HEK293 (cell line): ENCODE measurements at regions of chr10 and their contacts with region 1.

Region 1: GRCh38 chr10:92929896-92930295 is 81.6 kb downstream of the EXOC6 start:
- H3K4me3 ChIP-seq: no peak overlapping the region
- H3K27ac ChIP-seq: no peak overlapping the region
- H3K4me1 ChIP-seq: no peaks in the 10 kb centered on the region
- CTCF ChIP-seq: no peak

Region 2: GRCh38 chr10:92880233-92880861 is 49.5 kb before region 1 on chr10:
- CTCF ChIA-PET with region 1: no interaction called
- POLR2A ChIA-PET with region 1: no interaction called
- H3K4me3 ChIP-seq: no peak overlapping the region
- H3K27ac ChIP-seq: no peak overlapping the region
- H3K4me1 ChIP-seq: no peaks in the 10 kb centered on the region
- CTCF ChIP-seq: no peak

Region 3: GRCh38 chr10:92914478-92915325 is 15.2 kb before region 1 on chr10:
- CTCF ChIA-PET with region 1: interaction called, 11 read pairs
- POLR2A ChIA-PET with region 1: no interaction called
- H3K4me3 ChIP-seq: no peak overlapping the region
- H3K27ac ChIP-seq: no peak overlapping the region
- H3K4me1 ChIP-seq: no peaks in the 10 kb centered on the region
- CTCF ChIP-seq: 0 out of 2 replicates have a peak, but pooled peaks have one; percentile 19

Region 4: DNA sequence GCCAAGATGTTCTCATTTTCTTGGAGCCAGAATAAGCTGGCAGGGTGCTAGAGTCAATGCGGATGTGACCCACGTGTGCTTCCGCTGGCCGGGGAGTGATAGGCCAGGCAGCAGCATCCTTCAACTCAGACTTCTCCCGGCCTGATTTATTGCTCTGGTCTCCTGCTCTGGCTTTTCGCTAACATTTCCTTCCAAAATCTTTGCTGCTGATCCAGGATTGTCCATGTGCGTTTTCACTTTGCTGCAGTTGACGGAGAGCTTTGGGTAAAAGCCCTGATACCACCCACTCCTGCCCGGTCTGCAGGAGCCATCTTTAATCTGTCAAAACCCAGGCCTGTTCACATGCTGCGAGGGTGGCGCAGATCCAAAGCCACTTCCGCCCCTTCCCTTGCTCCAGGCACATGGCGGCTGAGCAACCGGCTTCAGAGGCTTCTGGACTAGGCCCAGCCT is 250.6 kb after region 1 on chr10:
- CTCF ChIA-PET with region 1: no interaction called
- POLR2A ChIA-PET with region 1: no interaction called
- H3K4me3 ChIP-seq: no peak overlapping the region
- H3K27ac ChIP-seq: no peak overlapping the region
- H3K4me1 ChIP-seq: no peaks in the 10 kb centered on the region
- CTCF ChIP-seq: no peak